Psoas muscle (tissue), 8 donors: ENCODE measurements at regions of chr4 and their contacts with region 1.

Region 1: DNA sequence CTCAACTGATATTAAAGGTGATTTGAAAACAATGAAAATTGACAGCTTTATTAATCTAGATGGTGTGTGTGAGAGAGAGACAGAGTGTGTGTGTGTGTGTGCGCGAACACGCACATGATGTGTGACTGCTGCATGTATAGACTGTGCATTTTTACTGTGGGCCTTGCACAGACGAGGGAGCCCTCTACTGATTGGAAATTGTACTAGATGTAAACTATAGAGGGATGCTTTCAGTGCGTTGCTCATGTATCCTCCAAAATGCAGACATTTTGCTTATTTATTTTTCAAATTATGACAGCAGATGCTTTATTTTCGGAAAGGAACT is 168.4 kb upstream of the GK2 start:
- DNase-seq: no peak
- ATAC-seq: peak in 1 of 4 donors; percentile 56
- H3K4me3 ChIP-seq: no peak overlapping the region
- H3K27ac ChIP-seq: no peak overlapping the region
- H3K4me1 ChIP-seq: no peaks in the 10 kb centered on the region
- H3K27me3 ChIP-seq: no peaks in the 10 kb centered on the region
- CTCF ChIP-seq: peak; percentile 15

Region 2: DNA sequence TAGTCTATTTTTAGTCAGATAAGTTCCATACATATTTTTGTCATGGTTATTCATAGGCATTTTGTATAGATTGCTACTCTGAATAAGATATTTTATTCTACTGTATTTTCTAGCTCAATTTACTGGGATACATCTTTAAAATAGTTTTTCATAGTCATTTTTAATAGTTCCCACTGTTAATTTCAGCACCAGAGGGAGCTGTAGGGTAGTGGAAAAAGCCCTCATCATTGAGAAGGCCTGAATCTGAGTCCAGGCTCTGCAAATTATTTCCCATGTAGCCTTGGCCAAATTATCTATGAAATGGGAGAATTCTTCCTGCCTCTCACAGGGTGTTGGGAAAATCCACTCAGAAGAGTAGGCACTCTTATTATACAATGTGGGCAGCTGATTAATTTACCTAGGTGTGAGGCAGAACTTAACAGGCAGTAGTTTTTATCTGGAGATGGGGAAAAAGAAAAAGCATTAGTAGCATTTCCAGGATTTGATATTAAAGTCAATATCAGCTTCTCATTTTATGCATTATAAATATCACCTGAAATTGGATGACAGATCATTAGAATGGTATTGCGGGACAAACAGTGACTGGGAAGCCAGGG is 534.2 kb before region 1 on chr4:
- intact Hi-C with region 1: loop called in 1 of 2 experiments (anchors 10 kb)
- DNase-seq: no peak
- ATAC-seq: peak in 2 of 4 donors; percentile 40 to 61
- H3K4me3 ChIP-seq: no peak overlapping the region
- H3K27ac ChIP-seq: no peak overlapping the region
- H3K4me1 ChIP-seq: no peaks in the 10 kb centered on the region
- H3K27me3 ChIP-seq: no peaks in the 10 kb centered on the region
- CTCF ChIP-seq: peak; percentile 54

Region 3: DNA sequence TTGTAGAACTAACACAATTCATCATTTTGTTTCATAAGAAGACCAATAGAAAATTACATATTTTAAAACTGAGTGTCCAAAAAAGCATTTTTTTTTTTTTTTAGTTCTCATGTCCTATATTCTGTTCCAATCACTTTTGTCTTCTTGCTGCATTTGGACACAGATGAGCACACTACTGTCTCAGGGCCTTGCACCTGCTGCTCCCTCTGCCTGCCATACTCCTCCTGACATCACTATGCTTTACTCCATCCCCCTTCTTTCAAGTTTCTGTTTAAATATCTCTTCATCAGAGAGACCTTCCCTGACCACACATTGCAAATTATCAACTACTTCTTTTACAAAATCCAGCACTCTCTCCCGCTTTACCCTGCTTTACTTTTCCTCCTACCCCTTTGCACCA is 62.3 kb after region 1 on chr4:
- intact Hi-C with region 1: no loop called
- DNase-seq: no peak
- ATAC-seq: no peak
- H3K4me3 ChIP-seq: no peak overlapping the region
- H3K27ac ChIP-seq: no peak overlapping the region
- H3K4me1 ChIP-seq: no peaks in the 10 kb centered on the region
- H3K27me3 ChIP-seq: no peaks in the 10 kb centered on the region
- CTCF ChIP-seq: no peak

Region 4: DNA sequence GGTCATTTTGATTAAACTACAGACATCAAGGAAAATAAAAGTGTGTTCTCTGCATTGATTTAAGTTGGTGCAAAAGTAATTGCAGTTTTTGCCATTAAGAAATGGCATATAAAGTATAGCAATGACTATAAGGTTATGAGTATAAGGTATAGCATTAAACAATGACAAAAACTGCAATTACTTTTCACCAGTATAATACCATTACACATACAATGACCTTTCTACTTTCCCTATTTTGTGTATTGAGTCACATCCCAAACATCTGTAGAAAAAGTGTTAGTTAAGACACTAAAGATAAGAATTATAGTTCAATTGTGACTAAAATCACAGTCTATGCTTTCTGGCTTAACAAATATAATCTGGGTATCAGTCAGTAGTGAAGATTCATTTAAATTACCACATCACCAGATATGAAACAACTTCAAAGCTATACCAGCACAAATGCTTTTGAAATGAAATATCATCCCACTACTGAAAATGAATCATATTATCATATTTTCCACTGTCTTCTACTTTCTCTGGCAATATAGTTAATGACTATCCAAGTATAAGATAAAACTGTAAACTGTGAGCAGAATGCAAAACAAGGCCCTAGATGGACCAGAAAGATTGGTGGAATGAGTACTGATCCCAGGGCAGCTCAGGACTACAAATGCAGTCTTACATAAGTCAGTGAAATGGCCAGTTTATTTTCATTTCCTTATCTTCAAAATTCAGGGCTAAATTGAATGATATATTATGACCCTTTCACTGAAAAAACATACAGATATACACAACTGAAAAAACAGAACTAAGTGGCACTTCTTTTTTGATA is 255.5 kb after region 1 on chr4:
- intact Hi-C with region 1: no loop called
- DNase-seq: no peak
- ATAC-seq: no peak
- H3K4me3 ChIP-seq: no peak overlapping the region
- H3K27ac ChIP-seq: no peak overlapping the region
- H3K4me1 ChIP-seq: no peaks in the 10 kb centered on the region
- H3K27me3 ChIP-seq: no peaks in the 10 kb centered on the region
- CTCF ChIP-seq: no peak